PC-3 (cell line): ENCODE measurements at regions of chr1 and their contacts with region 1.

Region 1: GRCh38 chr1:89804642-89805237 is 16.1 kb upstream of the LRRC8D start:
- DNase-seq: peak; percentile 93
- ATAC-seq: peak; percentile 86
- H3K4me3 ChIP-seq: no peak overlapping the region
- H3K27ac ChIP-seq: no peak overlapping the region
- H3K4me1 ChIP-seq: peaks cover 23% of the 10 kb centered on the region
- H3K27me3 ChIP-seq: no peaks in the 10 kb centered on the region
- CTCF ChIP-seq: peak; percentile 96

Region 2: DNA sequence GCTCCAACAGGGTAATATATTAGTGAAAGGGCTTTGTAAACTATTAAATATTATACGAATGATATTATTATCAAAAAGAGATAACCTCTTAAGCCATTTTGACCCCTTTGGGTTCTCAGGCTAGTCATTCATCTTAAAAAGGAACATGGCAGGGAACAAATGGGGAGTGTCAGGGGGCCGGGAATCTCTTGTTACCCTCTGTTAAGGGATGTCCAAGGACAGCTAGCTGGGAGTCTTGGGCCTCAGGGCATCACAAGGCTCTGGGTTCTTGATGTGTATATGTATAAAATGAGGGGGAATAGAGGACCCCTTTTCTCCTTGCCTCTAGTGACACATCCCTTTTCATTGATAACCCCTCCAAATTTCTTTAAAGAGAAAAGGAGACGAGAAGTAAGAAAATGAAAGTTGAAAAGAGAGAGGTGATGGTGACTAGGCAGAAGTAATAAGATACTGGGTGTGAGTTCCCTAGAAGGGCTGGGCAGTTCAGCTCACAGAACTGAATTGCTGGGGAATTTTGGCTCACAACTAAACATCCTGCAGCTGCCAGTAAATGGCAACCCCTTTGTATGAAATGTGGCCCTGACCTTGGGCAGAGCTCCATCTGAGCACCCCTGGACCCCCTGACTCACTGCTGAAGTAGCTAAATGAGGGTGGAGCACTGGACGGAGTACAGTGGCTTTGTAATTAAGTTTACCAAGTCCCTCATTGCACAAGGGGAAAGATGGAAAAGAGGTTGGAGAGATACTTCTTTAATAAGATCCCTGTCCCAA is 170.1 kb after region 1 on chr1:
- CTCF ChIA-PET with region 1: no interaction called
- POLR2A ChIA-PET with region 1: interaction called, 26 read pairs
- intact Hi-C with region 1: no loop called
- DNase-seq: no peak
- ATAC-seq: peak; percentile 51
- H3K4me3 ChIP-seq: no peak overlapping the region
- H3K27ac ChIP-seq: no peak overlapping the region
- H3K4me1 ChIP-seq: peaks cover 30% of the 10 kb centered on the region
- H3K27me3 ChIP-seq: no peaks in the 10 kb centered on the region
- CTCF ChIP-seq: no peak